Common myeloid progenitor, CD34-positive (primary cell): ENCODE measurements at regions of chr11 and their contacts with region 1.

Region 1: DNA sequence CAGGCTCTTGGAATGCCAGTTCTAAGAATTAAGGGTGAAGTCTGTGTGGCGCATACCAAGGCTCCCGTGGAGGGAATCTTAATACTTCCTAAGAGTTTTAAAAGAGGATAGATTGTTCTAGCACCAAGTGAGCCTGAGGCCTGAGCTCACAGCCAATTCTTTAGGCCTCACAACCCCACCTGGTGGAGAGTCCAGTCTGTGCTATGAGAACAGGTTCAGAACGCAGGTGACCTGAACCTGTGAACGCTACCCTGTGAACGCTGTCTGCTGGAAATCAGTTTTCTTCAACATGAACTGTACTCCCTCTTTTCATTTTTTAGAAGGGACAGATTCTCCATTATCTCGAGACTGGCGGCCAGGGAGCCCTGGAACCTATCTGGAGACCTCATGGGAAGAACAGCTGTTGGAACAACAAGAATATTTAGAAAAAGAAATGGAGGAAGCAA is 43.2 kb upstream of the DLAT start:
- DNase-seq: peak; percentile 52 to 69 (median 64)
- H3K4me3 ChIP-seq: no peak overlapping the region
- H3K27ac ChIP-seq: no peak overlapping the region
- H3K4me1 ChIP-seq: peaks cover 5 to 8% (median 7%) of the 10 kb centered on the region in 4 experiments
- H3K27me3 ChIP-seq: peaks cover 4 to 27% (median 5%) of the 10 kb centered on the region in 5 experiments

Region 2: GRCh38 chr11:111841370-111842053 is 140.5 kb before region 1 on chr11:
- CTCF ChIA-PET with region 1: no interaction called
- POLR2A ChIA-PET with region 1: no interaction called
- DNase-seq: peak; percentile 83 to 91 (median 86)
- H3K4me3 ChIP-seq: no peak overlapping the region
- H3K27ac ChIP-seq: no peak overlapping the region
- H3K4me1 ChIP-seq: peaks cover 0 to 7% (median 0%) of the 10 kb centered on the region in 4 experiments
- H3K27me3 ChIP-seq: no peaks in the 10 kb centered on the region

Region 3: DNA sequence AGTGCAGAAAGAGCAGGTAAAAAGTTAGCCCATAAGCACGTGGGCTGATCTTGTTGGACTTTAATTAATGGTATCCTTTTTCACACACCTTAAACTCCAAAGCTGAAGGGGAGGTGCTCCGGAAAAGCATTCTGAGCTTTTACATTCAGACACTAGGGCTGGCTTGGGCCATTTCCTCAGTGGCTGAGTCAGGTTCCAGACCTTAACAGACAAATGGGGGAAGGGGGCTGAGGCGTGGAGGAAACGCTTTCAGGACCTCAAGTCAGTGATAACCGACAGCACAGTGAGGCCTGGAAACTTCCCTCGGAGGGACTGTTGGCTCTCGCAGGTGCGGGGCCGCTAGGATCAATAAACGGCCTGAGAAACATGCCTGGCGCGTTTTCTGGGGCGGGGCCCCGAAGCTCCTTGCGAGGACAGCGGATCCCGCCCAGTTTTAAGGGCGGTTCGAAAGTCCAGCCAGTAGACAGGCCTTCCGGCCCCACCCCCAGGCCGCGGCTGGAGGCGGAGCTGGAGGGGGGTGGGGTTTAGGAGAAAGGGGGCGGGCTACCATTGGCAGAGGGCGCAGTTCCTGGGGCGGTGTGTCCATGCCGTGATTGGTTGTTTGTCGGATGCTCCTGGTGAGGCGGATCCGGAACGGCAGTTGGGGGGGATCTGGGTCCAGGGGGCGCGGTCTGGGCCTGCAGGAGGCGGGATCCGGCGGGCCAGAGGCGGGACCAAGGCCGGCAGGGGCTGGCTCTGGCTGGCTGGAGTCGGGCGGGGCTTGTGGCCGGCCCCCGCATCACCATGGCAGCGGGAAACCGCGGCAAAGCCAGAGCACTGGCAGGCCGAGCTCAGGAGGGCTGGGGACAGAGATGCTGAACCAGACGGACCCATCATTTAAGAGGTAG is 55.3 kb before region 1 on chr11:
- CTCF ChIA-PET with region 1: interaction called, 248 read pairs
- POLR2A ChIA-PET with region 1: interaction called, 4 read pairs
- DNase-seq: peak; percentile 97 to 98 (median 97)
- H3K4me3 ChIP-seq: peak overlapping the region; percentile 32 to 87 (median 69)
- H3K27ac ChIP-seq: peak overlapping the region; percentile 1 to 84
- H3K4me1 ChIP-seq: peaks cover 0 to 22% (median 9%) of the 10 kb centered on the region in 4 experiments
- H3K27me3 ChIP-seq: no peaks in the 10 kb centered on the region

Region 4: DNA sequence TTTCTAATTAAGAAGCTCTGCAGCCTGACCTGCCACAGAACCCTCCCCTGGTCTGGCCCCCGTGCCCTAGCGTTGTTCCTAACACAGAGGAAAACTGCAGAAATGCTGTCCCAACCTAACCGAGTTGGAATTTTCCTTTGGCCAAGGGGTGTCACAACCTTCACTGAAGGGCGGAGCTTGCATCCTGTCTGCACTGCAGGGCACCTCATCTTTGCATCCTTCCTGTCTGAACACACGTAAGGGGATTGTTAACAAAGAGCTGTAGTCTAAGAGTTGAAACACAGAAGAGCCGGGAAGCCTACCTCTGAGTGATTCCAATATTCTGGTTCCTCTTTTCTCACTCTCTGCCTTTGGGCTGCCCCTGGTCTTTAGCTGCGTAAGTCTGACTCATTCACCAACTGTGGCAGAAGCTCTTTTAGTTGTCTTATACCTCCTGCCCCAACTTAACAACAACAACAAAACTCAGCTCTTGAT is 43.3 kb before region 1 on chr11:
- CTCF ChIA-PET with region 1: interaction called, 248 read pairs
- POLR2A ChIA-PET with region 1: no interaction called
- DNase-seq: peak; percentile 66 to 91 (median 89)
- H3K4me3 ChIP-seq: peak overlapping the region in 5 of 7 experiments; percentile 4 to 89 (median 35)
- H3K27ac ChIP-seq: peak overlapping the region in 1 of 2 experiments; percentile 63
- H3K4me1 ChIP-seq: peaks cover 6 to 50% (median 34%) of the 10 kb centered on the region in 4 experiments
- H3K27me3 ChIP-seq: no peaks in the 10 kb centered on the region

Region 5: DNA sequence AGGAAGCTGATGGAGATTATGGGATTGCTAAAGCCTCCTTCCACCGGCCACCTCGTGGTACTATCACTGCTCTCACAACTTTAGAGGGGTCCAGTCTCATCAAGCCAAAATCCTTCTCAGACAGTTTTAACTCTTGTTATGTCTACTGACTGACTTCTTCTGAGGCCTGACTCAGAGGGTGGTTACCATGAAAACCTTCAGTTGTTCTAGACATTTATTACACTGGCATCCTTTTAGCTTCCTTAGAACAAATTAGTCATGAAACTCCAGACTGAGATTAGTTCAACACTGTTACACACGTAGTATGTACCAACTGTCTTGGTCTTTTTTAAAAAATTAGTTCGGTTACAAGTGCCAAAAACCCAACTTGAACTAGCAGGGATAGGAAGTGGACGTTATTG is 37.4 kb before region 1 on chr11:
- CTCF ChIA-PET with region 1: interaction called, 248 read pairs
- POLR2A ChIA-PET with region 1: no interaction called
- DNase-seq: no peak
- H3K4me3 ChIP-seq: no peak overlapping the region
- H3K27ac ChIP-seq: no peak overlapping the region
- H3K4me1 ChIP-seq: peaks cover 0 to 13% (median 4%) of the 10 kb centered on the region in 4 experiments
- H3K27me3 ChIP-seq: no peaks in the 10 kb centered on the region

Region 6: GRCh38 chr11:111957663-111958444 is 24.2 kb before region 1 on chr11:
- CTCF ChIA-PET with region 1: interaction called, 13 read pairs
- POLR2A ChIA-PET with region 1: no interaction called
- DNase-seq: no peak
- H3K4me3 ChIP-seq: no peak overlapping the region
- H3K27ac ChIP-seq: no peak overlapping the region
- H3K4me1 ChIP-seq: no peaks in the 10 kb centered on the region
- H3K27me3 ChIP-seq: no peaks in the 10 kb centered on the region

Region 7: GRCh38 chr11:111992206-111992855 is 10.3 kb after region 1 on chr11:
- CTCF ChIA-PET with region 1: interaction called, 37 read pairs
- POLR2A ChIA-PET with region 1: no interaction called
- DNase-seq: no peak
- H3K4me3 ChIP-seq: no peak overlapping the region
- H3K27ac ChIP-seq: no peak overlapping the region
- H3K4me1 ChIP-seq: no peaks in the 10 kb centered on the region
- H3K27me3 ChIP-seq: no peaks in the 10 kb centered on the region